CD14-positive monocyte (primary cell): ENCODE measurements at regions of chr2 and their contacts with region 1.

Region 1: GRCh38 chr2:96536445-96537065 is at the start of gene ARID5A:
- DNase-seq: peak; percentile 84 to 89 (median 86)
- H3K4me3 ChIP-seq: peak within 1 kb of the TSS; percentile 71 to 88 (median 72)
- H3K4me3 Mint-ChIP-seq: peak within 1 kb of the TSS; percentile 95 to 96
- H3K27ac ChIP-seq: peak within 1 kb of the TSS; percentile 92 to 94
- H3K27ac Mint-ChIP-seq: peak within 1 kb of the TSS; percentile 94 to 97 (median 97)
- H3K4me1 ChIP-seq: peaks cover 65 to 83% of the 10 kb centered on the region in 2 donors
- H3K4me1 Mint-ChIP-seq: peaks cover 63% of the 10 kb centered on the region
- H3K27me3 ChIP-seq: no peaks in the 10 kb centered on the region
- H3K27me3 Mint-ChIP-seq: peaks cover 0 to 5% (median 2%) of the 10 kb centered on the region in 3 donors
- CTCF ChIP-seq: peak; percentile 62
- polyA plus RNA-seq, gene ARID5A: 27.8 to 38.8 (median 37.7) TPM

Region 2: DNA sequence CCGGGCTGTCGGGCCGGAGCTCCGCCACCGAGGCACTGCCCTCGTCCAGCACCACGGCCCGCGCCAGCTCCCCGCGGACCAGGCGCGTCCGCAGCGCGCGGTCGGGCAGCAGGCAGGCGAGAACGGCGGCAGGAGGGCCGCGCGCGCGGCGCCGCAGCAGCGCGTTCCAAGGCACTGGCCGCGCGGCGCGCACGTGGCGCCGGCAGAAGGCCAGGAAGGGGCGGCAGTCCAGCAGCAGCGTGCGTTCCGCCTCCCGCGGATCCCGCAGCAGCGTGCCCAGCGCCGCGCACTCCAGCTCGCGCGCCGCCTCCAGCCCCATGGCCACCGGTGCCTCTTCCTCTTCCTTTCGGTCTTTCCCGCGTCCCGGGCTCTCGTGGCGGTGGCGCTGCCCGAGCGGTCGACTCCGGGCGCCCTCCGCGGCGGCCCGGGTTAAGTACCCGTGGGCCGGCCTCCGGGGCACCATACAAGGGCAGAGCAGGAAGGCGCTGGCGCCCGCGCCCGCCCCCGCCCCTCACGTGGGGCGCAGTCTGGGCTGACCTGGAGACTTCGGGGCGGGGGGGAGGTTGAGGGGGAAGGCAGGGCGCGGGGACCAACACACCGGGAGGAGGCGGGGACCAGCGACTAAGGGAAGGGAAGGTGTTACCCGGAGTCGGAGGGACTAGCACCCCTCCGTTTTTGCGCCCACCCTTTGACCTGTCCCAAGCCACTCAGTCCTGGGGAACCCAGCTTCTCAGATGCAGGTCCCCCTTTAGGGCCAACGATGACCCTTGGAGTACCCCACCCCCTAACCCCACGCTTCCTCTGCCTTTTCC is 391.3 kb before region 1 on chr2 and contains the start of gene DUSP2:
- intact Hi-C with region 1: loop called (anchors 10 kb)
- DNase-seq: peak; percentile 86 to 93 (median 92)
- H3K4me3 ChIP-seq: peak within 1 kb of the TSS; percentile 40 to 93 (median 64)
- H3K4me3 Mint-ChIP-seq: peak within 1 kb of the TSS; percentile 91 to 96
- H3K27ac ChIP-seq: peak within 1 kb of the TSS; percentile 95 to 98
- H3K27ac Mint-ChIP-seq: peak within 1 kb of the TSS; percentile 95 to 99 (median 98)
- H3K4me1 ChIP-seq: peaks cover 49 to 59% of the 10 kb centered on the region in 2 donors
- H3K4me1 Mint-ChIP-seq: peaks cover 60% of the 10 kb centered on the region
- H3K27me3 ChIP-seq: no peaks in the 10 kb centered on the region
- H3K27me3 Mint-ChIP-seq: peaks cover 0 to 13% (median 3%) of the 10 kb centered on the region in 3 donors
- CTCF ChIP-seq: no peak
- polyA plus RNA-seq, gene DUSP2: 48.4 to 392 (median 66.1) TPM